Activated CD4-positive, alpha-beta T cell treated with anti-CD3 and anti-CD28 coated beads for 36 hours (primary cell): ENCODE measurements at regions of chr9 and their contacts with region 1.

Region 1: DNA sequence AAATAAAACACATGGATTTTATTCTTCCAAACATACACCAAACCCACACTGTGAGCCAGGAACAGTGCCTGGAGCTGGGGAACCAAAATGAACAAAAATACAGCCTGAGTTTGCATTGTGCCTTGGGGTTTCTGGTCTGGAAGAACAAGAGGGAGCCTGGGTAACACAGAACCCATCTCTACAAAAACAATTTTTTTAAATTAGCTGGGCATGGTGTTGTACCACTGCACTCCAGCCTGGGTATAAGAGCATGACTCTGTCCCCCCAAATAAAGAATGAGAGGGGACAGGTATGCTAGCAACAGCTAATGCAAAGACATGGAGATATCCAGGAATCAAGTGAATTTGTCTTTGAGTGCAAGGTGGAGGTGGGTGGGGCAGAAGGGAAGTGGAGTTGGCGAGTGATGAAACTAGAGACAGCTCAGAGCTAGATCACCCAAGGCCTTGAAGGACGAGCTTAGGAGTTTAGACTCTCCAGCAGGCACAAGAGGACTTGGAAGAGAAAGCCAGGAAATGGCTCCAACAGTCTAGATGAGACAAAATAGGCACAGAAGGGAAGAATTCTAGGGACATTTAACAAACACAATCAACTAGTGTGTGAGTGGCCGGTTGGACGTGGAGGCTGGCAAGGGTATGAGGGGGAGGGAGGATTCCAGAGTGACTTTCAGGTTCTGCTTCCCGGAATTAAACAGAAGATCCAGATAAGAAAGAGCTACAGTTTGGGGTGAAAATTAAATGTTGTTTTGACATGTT is 47.4 kb downstream of the FNBP1 start:
- DNase-seq: peak; percentile 69
- ATAC-seq: peak; percentile 43
- H3K4me3 Mint-ChIP-seq: peak overlapping the region; percentile 59
- H3K27ac Mint-ChIP-seq: peak overlapping the region; percentile 96
- H3K4me1 Mint-ChIP-seq: peaks cover 88% of the 10 kb centered on the region
- H3K27me3 Mint-ChIP-seq: no peaks in the 10 kb centered on the region

Region 2: GRCh38 chr9:130010151-130010988 is 14.8 kb after region 1 on chr9:
- CTCF ChIA-PET with region 1: interaction called, 6 read pairs
- POLR2A ChIA-PET with region 1: interaction called, 16 read pairs
- intact Hi-C with region 1: loop called (anchors 1 kb)
- DNase-seq: peak; percentile 64
- ATAC-seq: peak; percentile 69
- H3K4me3 Mint-ChIP-seq: peak overlapping the region; percentile 39
- H3K27ac Mint-ChIP-seq: peak overlapping the region; percentile 92
- H3K4me1 Mint-ChIP-seq: peaks cover 90% of the 10 kb centered on the region
- H3K27me3 Mint-ChIP-seq: no peaks in the 10 kb centered on the region

Region 3: DNA sequence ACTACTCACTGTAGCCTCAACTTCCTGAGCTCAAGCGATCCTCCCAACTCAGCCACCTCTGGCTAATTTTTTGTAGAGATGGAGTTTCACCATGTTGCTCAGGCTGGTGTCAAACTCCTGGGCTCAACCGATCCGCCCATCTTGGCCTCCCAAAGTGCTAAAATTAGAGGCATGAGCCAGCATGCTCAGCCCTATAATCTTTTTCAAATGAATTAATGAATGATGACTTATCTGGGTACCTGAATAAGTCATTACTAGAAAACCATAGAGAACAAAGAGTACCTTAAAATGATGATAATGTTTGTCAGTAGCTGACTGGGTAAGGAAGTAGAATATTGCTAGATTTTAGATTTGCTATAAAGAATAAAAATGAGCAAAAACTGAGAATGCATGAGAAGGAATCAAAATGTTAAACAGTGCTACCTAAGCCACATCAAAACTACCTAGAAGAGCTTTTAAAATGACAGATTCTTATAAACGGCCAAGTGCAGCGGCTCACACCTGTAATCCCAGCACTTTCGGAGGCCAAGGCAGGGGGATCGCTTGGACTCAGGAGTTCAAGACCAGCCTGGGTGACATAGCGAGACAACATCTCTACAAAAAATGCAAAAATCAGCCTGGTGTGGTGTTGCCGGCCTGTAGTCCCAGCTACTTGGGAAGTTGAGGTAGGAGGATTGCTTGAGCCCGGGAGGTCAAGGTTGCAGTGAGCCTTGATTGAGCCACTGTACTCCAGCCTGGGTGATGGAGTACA is 33.8 kb after region 1 on chr9:
- CTCF ChIA-PET with region 1: interaction called, 12 read pairs
- POLR2A ChIA-PET with region 1: interaction called, 32 read pairs
- intact Hi-C with region 1: loop called in 1 of 2 experiments (anchors 1 kb)
- DNase-seq: peak; percentile 70
- ATAC-seq: peak; percentile 45
- H3K4me3 Mint-ChIP-seq: peak overlapping the region; percentile 44
- H3K27ac Mint-ChIP-seq: peak overlapping the region; percentile 92
- H3K4me1 Mint-ChIP-seq: peaks cover 98% of the 10 kb centered on the region
- H3K27me3 Mint-ChIP-seq: no peaks in the 10 kb centered on the region